ENCODE measurements at regions of chr19 and their contacts with region 1.

Region 1: GRCh38 chr19:11482384-11483050 is 1.7 kb upstream of the ELAVL3 start:
- DNase-seq: peak; percentile 50
- ATAC-seq: peak; percentile 95
- H3K4me3 ChIP-seq: peak overlapping the region; percentile 40; the same call in 1 of the 2 replicates
- H3K27ac ChIP-seq: no peak overlapping the region
- H3K4me1 ChIP-seq: peaks cover 19% of the 10 kb centered on the region
- H3K27me3 ChIP-seq: peaks cover 8 to 10% of the 10 kb centered on the region in 2 experiments
- CTCF ChIP-seq: peak; percentile 83 to 99 (median 93); a peak in 5 of 6 replicates
- EP300 ChIP-seq: peak; percentile 7 to 35; a peak in 1 of 4 replicates
- POLR2A ChIP-seq: no peak; the same call in 1 of the 2 replicates
- RAD21 ChIP-seq: peak; percentile 69

Region 2: DNA sequence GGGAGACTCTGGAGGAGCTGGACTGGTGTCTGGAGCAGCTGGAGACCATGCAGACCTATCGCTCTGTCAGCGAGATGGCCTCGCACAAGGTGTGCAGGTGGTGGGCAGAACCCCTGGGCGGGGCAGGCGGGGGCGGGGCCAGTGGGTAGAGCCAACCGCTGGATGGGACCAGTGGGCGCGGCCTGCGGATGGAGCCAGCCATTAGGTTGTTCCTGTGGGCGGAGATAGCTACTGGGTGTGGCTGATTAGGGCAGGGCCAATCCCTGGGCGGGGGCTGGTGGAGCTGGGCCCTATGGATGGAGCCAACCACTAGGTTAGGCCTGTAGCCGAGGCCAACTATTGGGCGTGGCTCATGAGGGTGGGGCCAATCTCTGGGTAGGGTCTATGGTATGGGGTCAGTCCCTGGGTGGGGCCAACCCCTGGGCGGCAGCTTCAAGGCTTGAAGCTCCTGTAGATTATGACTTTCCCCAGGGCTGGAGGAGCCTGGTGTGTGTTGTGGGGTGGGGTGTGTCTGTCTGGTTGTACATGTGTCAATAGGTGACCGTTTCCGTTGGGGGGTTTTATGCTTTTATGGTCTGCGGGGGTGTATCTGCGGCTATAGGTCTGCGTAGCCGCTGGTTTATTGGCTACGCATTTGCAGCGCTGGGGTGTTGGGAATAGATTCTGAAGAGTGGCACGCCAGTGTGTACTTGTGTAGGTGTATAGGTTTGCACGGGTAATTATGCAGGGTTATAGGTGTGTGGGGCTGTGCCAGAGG is 1031.5 kb before region 1 on chr19:
- CTCF ChIA-PET with region 1: no interaction called
- POLR2A ChIA-PET with region 1: no interaction called
- RAD21 ChIA-PET with region 1: no interaction called
- SMC1A ChIA-PET with region 1: no interaction called
- in situ Hi-C with region 1: no loop called
- intact Hi-C with region 1: no loop called
- DNase-seq: no peak
- ATAC-seq: peak; percentile 78
- H3K4me3 ChIP-seq: no peak overlapping the region
- H3K27ac ChIP-seq: no peak overlapping the region
- H3K4me1 ChIP-seq: no peaks in the 10 kb centered on the region
- H3K27me3 ChIP-seq: no peaks in the 10 kb centered on the region
- CTCF ChIP-seq: no peak
- EP300 ChIP-seq: no peak
- POLR2A ChIP-seq: no peak
- RAD21 ChIP-seq: no peak

Region 3: GRCh38 chr19:11142528-11143171 is 339.9 kb before region 1 on chr19:
- CTCF ChIA-PET with region 1: no interaction called
- POLR2A ChIA-PET with region 1: no interaction called
- RAD21 ChIA-PET with region 1: no interaction called
- SMC1A ChIA-PET with region 1: no interaction called
- in situ Hi-C with region 1: no loop called
- intact Hi-C with region 1: no loop called
- DNase-seq: no peak
- ATAC-seq: no peak; the same call in 2 of the 3 replicates
- H3K4me3 ChIP-seq: no peak overlapping the region; the same call in 1 of the 2 replicates
- H3K27ac ChIP-seq: peak overlapping the region; percentile 44
- H3K4me1 ChIP-seq: peaks cover 15% of the 10 kb centered on the region
- H3K27me3 ChIP-seq: no peaks in the 10 kb centered on the region
- CTCF ChIP-seq: no peak
- EP300 ChIP-seq: no peak
- POLR2A ChIP-seq: no peak
- RAD21 ChIP-seq: no peak

Region 4: GRCh38 chr19:11242864-11243797 is 239.4 kb before region 1 on chr19:
- CTCF ChIA-PET with region 1: interaction called, 14 read pairs
- POLR2A ChIA-PET with region 1: no interaction called
- RAD21 ChIA-PET with region 1: interaction called, 3 read pairs
- SMC1A ChIA-PET with region 1: no interaction called
- in situ Hi-C with region 1: no loop called
- intact Hi-C with region 1: no loop called
- DNase-seq: peak; percentile 4
- ATAC-seq: peak; percentile 100
- H3K4me3 ChIP-seq: no peak overlapping the region
- H3K27ac ChIP-seq: no peak overlapping the region
- H3K4me1 ChIP-seq: no peaks in the 10 kb centered on the region
- H3K27me3 ChIP-seq: no peaks in the 10 kb centered on the region
- CTCF ChIP-seq: peak; percentile 54 to 90 (median 61)
- EP300 ChIP-seq: no peak
- POLR2A ChIP-seq: 0 out of 2 replicates have a peak, but pooled peaks have one; percentile 26
- RAD21 ChIP-seq: no peak

Region 5: DNA sequence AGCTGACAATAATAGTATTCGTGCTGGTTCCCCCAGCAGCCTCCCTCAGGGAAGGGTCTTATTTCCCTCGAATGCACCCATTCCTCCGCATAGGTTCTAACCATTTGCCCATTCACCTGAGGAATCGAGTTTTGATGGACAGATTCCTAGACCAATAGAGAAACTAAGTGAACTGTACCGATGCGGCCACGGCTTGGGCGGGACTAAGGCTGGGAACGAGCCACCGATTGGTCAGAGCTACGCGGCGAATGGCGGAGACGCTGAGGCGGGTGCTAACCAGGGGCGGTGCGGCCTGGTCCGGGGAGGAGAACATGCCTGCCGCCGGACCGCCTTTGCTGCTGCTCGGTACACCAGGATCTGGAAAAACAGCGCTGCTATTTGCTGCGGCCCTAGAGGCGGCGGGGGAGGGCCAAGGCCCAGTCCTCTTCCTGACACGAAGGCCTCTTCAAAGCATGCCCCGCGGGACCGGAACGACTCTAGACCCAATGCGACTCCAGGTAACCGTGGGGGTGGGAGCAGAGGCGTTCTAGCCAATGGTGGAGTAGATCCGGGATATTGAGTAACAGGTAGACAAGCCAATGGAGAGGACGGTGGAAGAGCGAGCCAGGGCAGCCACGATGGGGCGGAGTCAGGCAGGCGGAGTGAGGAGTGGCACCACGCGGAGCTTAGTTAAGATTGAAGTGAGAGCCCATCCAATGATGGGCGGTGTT is 107.9 kb before region 1 on chr19 and contains the start of gene SWSAP1:
- CTCF ChIA-PET with region 1: interaction called, 76 read pairs
- POLR2A ChIA-PET with region 1: interaction called, 7 read pairs
- RAD21 ChIA-PET with region 1: interaction called, 36 read pairs
- SMC1A ChIA-PET with region 1: interaction called, 30 read pairs
- in situ Hi-C with region 1: no loop called
- intact Hi-C with region 1: no loop called
- DNase-seq: peak; percentile 99
- ATAC-seq: peak; percentile 95
- H3K4me3 ChIP-seq: peak within 1 kb of the TSS; percentile 77
- H3K27ac ChIP-seq: peak within 1 kb of the TSS; percentile 94
- H3K4me1 ChIP-seq: peaks cover 21% of the 10 kb centered on the region
- H3K27me3 ChIP-seq: no peaks in the 10 kb centered on the region
- CTCF ChIP-seq: no peak
- EP300 ChIP-seq: no peak
- POLR2A ChIP-seq: peak; percentile 95
- RAD21 ChIP-seq: no peak
- polyA plus RNA-seq, gene SWSAP1: 0.18 to 1.0 TPM

Region 6: GRCh38 chr19:11435058-11435832 is 47.3 kb before region 1 on chr19 and contains the starts of genes ODAD3 and PRKCSH:
- CTCF ChIA-PET with region 1: interaction called, 8 read pairs
- POLR2A ChIA-PET with region 1: no interaction called
- RAD21 ChIA-PET with region 1: interaction called, 10 read pairs
- SMC1A ChIA-PET with region 1: no interaction called
- in situ Hi-C with region 1: no loop called
- intact Hi-C with region 1: loop called (anchors 1 kb)
- DNase-seq: peak; percentile 99
- ATAC-seq: peak; percentile 98
- H3K4me3 ChIP-seq: peak within 1 kb of the TSS; percentile 99
- H3K27ac ChIP-seq: peak within 1 kb of the TSS; percentile 86
- H3K4me1 ChIP-seq: peaks cover 11% of the 10 kb centered on the region
- H3K27me3 ChIP-seq: no peaks in the 10 kb centered on the region
- CTCF ChIP-seq: peak; percentile 87 to 94 (median 93)
- EP300 ChIP-seq: peak in 1 of 2 experiments; percentile 44; a peak in 1 of 4 replicates
- POLR2A ChIP-seq: peak; percentile 86
- RAD21 ChIP-seq: no peak
- polyA plus RNA-seq, gene ODAD3: not detected
- polyA plus RNA-seq, gene PRKCSH: 1.1 to 5.2 TPM

Region 7: GRCh38 chr19:11453468-11454341 is 28.8 kb before region 1 on chr19:
- CTCF ChIA-PET with region 1: interaction called, 14 read pairs
- POLR2A ChIA-PET with region 1: interaction called, 9 read pairs
- RAD21 ChIA-PET with region 1: interaction called, 9 read pairs
- SMC1A ChIA-PET with region 1: interaction called, 7 read pairs
- in situ Hi-C with region 1: no loop called
- intact Hi-C with region 1: no loop called
- DNase-seq: no peak
- ATAC-seq: 0 out of 3 replicates have a peak, but pooled peaks have one; percentile 23
- H3K4me3 ChIP-seq: no peak overlapping the region
- H3K27ac ChIP-seq: no peak overlapping the region
- H3K4me1 ChIP-seq: 0 out of 2 replicates have a peak, but pooled peaks cover 4% of the 10 kb centered on the region
- H3K27me3 ChIP-seq: no peaks in the 10 kb centered on the region
- CTCF ChIP-seq: peak; percentile 32 to 64 (median 41)
- EP300 ChIP-seq: no peak
- POLR2A ChIP-seq: no peak
- RAD21 ChIP-seq: no peak

Region 8: GRCh38 chr19:11612816-11613511 is 130.4 kb after region 1 on chr19:
- CTCF ChIA-PET with region 1: no interaction called
- POLR2A ChIA-PET with region 1: no interaction called
- RAD21 ChIA-PET with region 1: no interaction called
- SMC1A ChIA-PET with region 1: no interaction called
- in situ Hi-C with region 1: no loop called
- intact Hi-C with region 1: no loop called
- DNase-seq: no peak
- ATAC-seq: no peak
- H3K4me3 ChIP-seq: no peak overlapping the region
- H3K27ac ChIP-seq: no peak overlapping the region
- H3K4me1 ChIP-seq: no peaks in the 10 kb centered on the region
- H3K27me3 ChIP-seq: no peaks in the 10 kb centered on the region
- CTCF ChIP-seq: no peak
- EP300 ChIP-seq: no peak
- POLR2A ChIP-seq: no peak
- RAD21 ChIP-seq: no peak

Region 9: GRCh38 chr19:11626252-11626651 is 143.7 kb after region 1 on chr19:
- CTCF ChIA-PET with region 1: no interaction called
- POLR2A ChIA-PET with region 1: no interaction called
- RAD21 ChIA-PET with region 1: no interaction called
- SMC1A ChIA-PET with region 1: no interaction called
- in situ Hi-C with region 1: no loop called
- intact Hi-C with region 1: no loop called
- DNase-seq: no peak
- ATAC-seq: no peak
- H3K4me3 ChIP-seq: no peak overlapping the region
- H3K27ac ChIP-seq: no peak overlapping the region
- H3K4me1 ChIP-seq: no peaks in the 10 kb centered on the region
- H3K27me3 ChIP-seq: no peaks in the 10 kb centered on the region; a peak in 1 of 4 replicates
- CTCF ChIP-seq: no peak
- EP300 ChIP-seq: no peak
- POLR2A ChIP-seq: no peak
- RAD21 ChIP-seq: no peak